ENCODE measurements at regions of chr10 and their contacts with region 1.

Region 1: GRCh38 chr10:75187961-75188426 is 22.6 kb upstream of the VDAC2 start:
- DNase-seq: peak; percentile 69
- ATAC-seq: peak; percentile 45
- H3K4me3 ChIP-seq: no peak overlapping the region
- H3K27ac ChIP-seq: no peak overlapping the region
- H3K4me1 ChIP-seq: peaks cover 76% of the 10 kb centered on the region
- H3K27me3 ChIP-seq: no peaks in the 10 kb centered on the region
- CTCF ChIP-seq: peak; percentile 78
- EP300 ChIP-seq: no peak
- POLR2A ChIP-seq: no peak
- RAD21 ChIP-seq: peak; percentile 79

Region 2: GRCh38 chr10:75111367-75111906 is 76.6 kb before region 1 on chr10 and contains the start of gene SAMD8:
- CTCF ChIA-PET with region 1: no interaction called
- POLR2A ChIA-PET with region 1: interaction called, 7 read pairs
- in situ Hi-C with region 1: no loop called
- intact Hi-C with region 1: loop called (anchors 5 kb)
- DNase-seq: peak; percentile 95
- ATAC-seq: peak; percentile 74; the same call in 2 of the 3 replicates
- H3K4me3 ChIP-seq: peak within 1 kb of the TSS; percentile 92 to 95 (median 94)
- H3K27ac ChIP-seq: peak within 1 kb of the TSS; percentile 91
- H3K4me1 ChIP-seq: peaks cover 69% of the 10 kb centered on the region
- H3K27me3 ChIP-seq: no peaks in the 10 kb centered on the region; a peak in 1 of 5 replicates
- CTCF ChIP-seq: peak; percentile 43
- EP300 ChIP-seq: no peak
- POLR2A ChIP-seq: peak in 1 of 2 experiments; percentile 67; a peak in 2 of 4 replicates
- RAD21 ChIP-seq: no peak
- total RNA-seq, gene SAMD8: 10.3 and 10.4 TPM in 2 replicates

Region 3: GRCh38 chr10:75165684-75166622 is 22.0 kb before region 1 on chr10:
- CTCF ChIA-PET with region 1: no interaction called
- POLR2A ChIA-PET with region 1: interaction called, 5 read pairs
- in situ Hi-C with region 1: no loop called
- intact Hi-C with region 1: loop called (anchors 2 kb)
- DNase-seq: no peak
- ATAC-seq: no peak
- H3K4me3 ChIP-seq: no peak overlapping the region
- H3K27ac ChIP-seq: peak overlapping the region; percentile 34
- H3K4me1 ChIP-seq: peaks cover 51% of the 10 kb centered on the region
- H3K27me3 ChIP-seq: no peaks in the 10 kb centered on the region
- CTCF ChIP-seq: no peak
- EP300 ChIP-seq: no peak
- POLR2A ChIP-seq: no peak
- RAD21 ChIP-seq: no peak

Measured in HepG2 (cell line).